ENCODE measurements at regions of chr18 and their contacts with region 1.

Region 1: GRCh38 chr18:11553098-11553940 is 56.1 kb upstream of the SLC35G4 start:
- DNase-seq: peak; percentile 5
- H3K4me3 ChIP-seq: no peak overlapping the region
- CTCF ChIP-seq: peak; percentile 81

Region 2: GRCh38 chr18:10851824-10852319 is 701.4 kb before region 1 on chr18:
- CTCF ChIA-PET with region 1: interaction called, 106 read pairs
- POLR2A ChIA-PET with region 1: interaction called, 3 read pairs
- DNase-seq: peak; percentile 16
- H3K4me3 ChIP-seq: no peak overlapping the region
- CTCF ChIP-seq: peak; percentile 38

Region 3: DNA sequence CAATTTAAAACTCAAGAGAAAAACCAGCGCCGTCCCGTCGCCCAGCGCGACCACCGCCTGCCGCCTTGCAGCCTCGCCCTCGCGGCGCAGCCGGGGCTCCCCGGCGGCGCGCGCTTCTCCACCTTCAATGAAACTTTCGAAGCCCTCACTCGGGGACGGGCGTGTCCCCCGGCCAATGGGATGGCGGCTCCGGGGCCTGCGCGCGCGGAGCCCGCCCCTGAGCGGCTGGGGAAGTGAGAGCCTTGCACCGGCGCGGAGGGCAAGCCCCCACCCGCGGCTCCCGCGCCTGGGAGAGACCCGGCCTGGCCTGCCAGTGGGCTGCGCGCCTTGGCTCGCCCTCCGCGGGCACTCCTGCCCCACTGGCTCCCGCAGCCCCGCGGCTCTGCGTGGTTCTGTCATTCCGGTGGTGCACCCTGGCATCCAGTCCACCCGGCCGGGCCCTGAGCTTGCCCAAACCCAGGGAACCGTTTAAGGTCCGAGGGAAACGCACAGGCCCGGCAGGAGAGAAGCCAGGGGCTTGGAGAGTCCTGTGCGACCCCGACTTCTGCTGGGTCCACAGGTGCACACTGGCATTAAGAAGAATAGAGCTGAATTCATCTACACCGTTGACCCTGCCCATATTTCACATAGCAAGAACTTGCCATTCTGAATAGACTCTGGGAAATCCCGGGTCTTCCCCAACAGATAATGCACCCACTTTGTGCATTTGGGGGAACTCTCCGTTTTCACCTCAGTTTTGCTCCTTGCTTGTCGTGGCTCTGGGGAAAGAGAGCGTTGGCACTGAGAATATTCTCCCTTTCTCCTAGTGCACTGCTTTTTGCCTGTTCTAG is 403.7 kb before region 1 on chr18 and contains the start of gene PIEZO2:
- CTCF ChIA-PET with region 1: interaction called, 13 read pairs
- POLR2A ChIA-PET with region 1: no interaction called
- DNase-seq: no peak
- H3K4me3 ChIP-seq: peak within 1 kb of the TSS; percentile 57
- CTCF ChIP-seq: no peak

Region 4: GRCh38 chr18:11316546-11316945 is 236.8 kb before region 1 on chr18:
- CTCF ChIA-PET with region 1: interaction called, 172 read pairs
- POLR2A ChIA-PET with region 1: no interaction called
- DNase-seq: no peak
- H3K4me3 ChIP-seq: no peak overlapping the region
- CTCF ChIP-seq: no peak

Region 5: DNA sequence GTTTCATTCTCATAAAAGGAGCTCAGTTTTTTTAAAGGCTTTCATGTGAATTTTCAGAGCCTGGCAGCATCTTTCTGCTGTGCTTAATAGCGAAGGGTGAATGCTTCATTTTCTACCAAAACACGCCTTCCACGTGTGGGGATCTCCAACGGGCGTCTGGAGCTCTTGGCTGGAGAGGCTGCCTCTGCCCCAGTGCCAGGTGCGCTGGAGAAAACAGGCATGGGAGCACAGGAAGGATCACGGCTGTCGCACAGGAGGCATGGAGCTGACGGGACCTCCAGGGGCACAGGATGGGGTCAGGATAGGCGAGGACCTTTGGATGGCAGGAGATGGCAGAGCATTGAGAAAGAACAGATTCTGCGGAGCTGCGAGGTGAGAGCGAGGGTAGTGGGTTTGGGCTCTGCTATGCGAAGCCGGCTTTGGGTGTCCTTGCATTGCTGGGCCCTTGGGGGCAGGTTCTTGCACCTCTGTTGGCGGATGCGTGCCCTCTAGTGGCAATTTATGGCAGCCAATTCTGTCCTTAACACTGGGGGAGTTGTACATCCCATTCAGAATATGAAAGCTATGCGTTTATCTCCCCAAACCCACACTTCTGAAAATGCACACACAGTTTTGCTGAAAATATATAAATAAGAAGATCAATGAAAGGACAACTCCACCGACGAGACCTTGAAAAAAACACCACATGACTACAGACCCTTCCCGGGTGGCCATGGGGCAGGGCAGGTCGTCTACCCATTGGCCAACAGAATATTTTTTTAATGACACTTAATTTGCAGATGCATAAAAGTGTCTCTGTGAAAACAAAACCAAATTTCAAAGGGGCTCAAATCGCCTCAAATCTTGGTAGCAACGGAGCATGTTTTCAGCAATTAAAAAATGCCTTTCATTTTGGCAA is 34.3 kb before region 1 on chr18:
- CTCF ChIA-PET with region 1: interaction called, 13 read pairs
- POLR2A ChIA-PET with region 1: no interaction called
- DNase-seq: no peak
- H3K4me3 ChIP-seq: no peak overlapping the region
- CTCF ChIP-seq: peak; percentile 59

Region 6: GRCh38 chr18:11570769-11571168 is 17.4 kb after region 1 on chr18:
- CTCF ChIA-PET with region 1: interaction called, 14 read pairs
- POLR2A ChIA-PET with region 1: no interaction called
- DNase-seq: no peak
- H3K4me3 ChIP-seq: no peak overlapping the region
- CTCF ChIP-seq: peak; percentile 5